MCF 10A (cell line): ENCODE measurements at regions of chr15 and their contacts with region 1.

Region 1: GRCh38 chr15:38354315-38354929 is 99.5 kb upstream of the FAM98B start:
- DNase-seq: peak; percentile 78
- H3K4me3 Mint-ChIP-seq: no peak overlapping the region
- H3K27ac Mint-ChIP-seq: no peak overlapping the region
- H3K4me1 Mint-ChIP-seq: no peaks in the 10 kb centered on the region
- H3K27me3 Mint-ChIP-seq: no peaks in the 10 kb centered on the region
- CTCF ChIP-seq: peak; percentile 63

Region 2: DNA sequence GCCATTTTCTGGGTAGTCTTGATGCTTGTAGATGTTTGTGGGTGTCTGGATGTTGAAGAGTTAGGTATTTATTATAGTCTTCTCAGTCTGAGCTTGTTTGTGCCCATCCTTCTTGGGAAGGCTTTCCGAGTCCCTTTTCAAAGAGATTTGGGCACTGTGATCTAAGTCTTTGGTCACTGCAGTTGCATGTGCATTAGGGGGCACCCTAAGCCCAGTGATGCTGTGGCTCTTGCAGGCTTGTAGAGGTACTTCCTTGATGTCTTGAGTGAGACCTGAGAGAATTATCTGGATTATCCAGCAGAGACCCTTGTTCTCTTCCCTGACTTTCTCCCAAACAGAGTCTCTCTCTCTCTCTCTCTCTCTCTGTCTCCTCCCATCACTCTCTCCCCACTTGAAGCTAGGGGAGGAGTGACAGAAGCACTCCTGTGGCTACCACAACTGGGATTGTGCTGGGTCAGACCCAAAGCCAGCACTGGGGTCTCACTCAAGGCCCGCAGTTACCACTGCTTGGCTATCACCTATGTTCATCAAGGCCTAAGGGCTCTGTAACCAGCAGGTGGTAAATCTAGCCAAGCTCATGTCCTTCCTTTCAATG is 351.4 kb before region 1 on chr15:
- CTCF ChIA-PET with region 1: interaction called, 109 read pairs
- POLR2A ChIA-PET with region 1: interaction called, 5 read pairs
- intact Hi-C with region 1: loop called (anchors 1 kb)
- DNase-seq: peak; percentile 75
- H3K4me3 Mint-ChIP-seq: no peak overlapping the region
- H3K27ac Mint-ChIP-seq: no peak overlapping the region
- H3K4me1 Mint-ChIP-seq: peaks cover 4% of the 10 kb centered on the region
- H3K27me3 Mint-ChIP-seq: no peaks in the 10 kb centered on the region
- CTCF ChIP-seq: peak; percentile 90

Region 3: DNA sequence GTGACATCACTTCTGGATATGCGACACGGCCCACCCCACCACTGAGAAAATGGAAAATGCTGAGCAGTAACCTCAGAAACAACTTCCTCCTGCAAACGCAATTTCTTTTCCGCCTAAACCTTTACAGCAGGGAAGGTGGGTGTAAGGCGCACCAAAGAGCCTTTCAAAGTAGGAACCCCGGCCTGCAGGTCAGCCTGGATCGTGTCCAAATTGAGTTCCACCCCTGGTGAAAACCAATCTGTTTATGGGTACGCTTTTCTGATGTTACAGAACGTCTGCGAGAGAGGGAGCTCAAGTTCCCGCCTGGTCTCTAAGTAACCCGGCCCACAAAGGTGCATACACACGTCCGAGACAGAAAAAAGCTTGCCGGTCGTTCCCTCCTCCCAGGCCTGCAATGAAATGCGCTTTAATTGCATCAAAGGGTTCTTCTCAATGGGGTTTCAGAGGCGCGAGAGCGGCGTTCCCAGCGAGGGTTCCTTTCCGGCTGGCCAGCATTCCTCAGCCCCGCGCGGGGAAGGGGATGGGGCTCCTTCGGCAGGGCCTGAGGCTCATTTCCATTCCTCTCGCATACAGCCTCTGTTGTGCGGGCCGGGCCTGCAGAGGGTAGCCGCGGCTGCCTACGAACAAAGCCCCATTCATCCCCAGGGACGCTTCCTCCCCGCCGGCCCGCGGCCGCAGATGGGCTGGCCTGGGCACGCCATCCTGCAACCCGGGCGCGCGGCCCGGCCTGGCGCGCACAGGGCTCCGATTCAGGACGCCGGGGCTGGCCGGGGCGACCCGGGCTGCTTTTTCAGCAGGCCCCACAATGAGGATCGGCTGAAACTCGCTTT is 281.9 kb before region 1 on chr15:
- CTCF ChIA-PET with region 1: no interaction called
- POLR2A ChIA-PET with region 1: no interaction called
- intact Hi-C with region 1: loop called (anchors 5 kb)
- DNase-seq: peak; percentile 82
- H3K4me3 Mint-ChIP-seq: peak overlapping the region; percentile 77
- H3K27ac Mint-ChIP-seq: peak overlapping the region; percentile 88
- H3K4me1 Mint-ChIP-seq: peaks cover 18% of the 10 kb centered on the region
- H3K27me3 Mint-ChIP-seq: no peaks in the 10 kb centered on the region
- CTCF ChIP-seq: peak; percentile 21

Region 4: DNA sequence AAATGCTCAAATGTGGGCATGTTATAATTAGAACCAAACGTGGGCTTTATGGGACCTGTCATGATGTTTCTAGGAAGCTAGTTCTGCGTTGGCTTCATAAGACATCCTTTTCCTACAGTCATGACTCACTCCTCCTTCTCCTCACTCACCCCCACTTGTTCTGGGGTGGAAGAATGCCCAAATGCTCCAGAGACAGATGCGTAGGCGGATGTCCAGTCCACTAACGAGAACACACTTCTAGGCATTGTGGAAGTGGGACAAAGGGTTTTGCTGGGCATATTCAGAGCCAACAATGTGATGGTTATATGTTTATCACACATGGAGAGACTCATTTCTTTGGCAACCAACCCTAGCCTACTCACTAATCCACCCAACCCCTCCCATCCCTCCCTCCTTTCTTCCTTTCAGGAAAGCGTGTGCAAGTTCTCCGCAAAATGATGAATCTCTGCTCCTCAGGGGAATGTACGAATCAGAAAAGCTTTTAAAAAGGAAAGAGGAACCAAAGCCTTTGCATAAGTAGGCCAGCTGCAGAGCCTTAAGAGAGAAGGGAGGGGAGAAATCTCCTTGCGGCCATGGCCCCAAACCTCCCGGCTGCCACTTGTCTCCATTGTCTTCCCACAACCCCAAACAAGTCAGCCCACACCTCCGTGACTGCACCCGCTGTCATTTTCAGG is 224.8 kb before region 1 on chr15:
- CTCF ChIA-PET with region 1: interaction called, 4 read pairs
- POLR2A ChIA-PET with region 1: no interaction called
- intact Hi-C with region 1: loop called (anchors 2 kb)
- DNase-seq: peak; percentile 99
- H3K4me3 Mint-ChIP-seq: peak overlapping the region; percentile 70
- H3K27ac Mint-ChIP-seq: peak overlapping the region; percentile 76
- H3K4me1 Mint-ChIP-seq: peaks cover 29% of the 10 kb centered on the region
- H3K27me3 Mint-ChIP-seq: no peaks in the 10 kb centered on the region
- CTCF ChIP-seq: no peak

Region 5: GRCh38 chr15:38164061-38164460 is 190.4 kb before region 1 on chr15:
- CTCF ChIA-PET with region 1: no interaction called
- POLR2A ChIA-PET with region 1: no interaction called
- intact Hi-C with region 1: no loop called
- DNase-seq: no peak
- H3K4me3 Mint-ChIP-seq: no peak overlapping the region
- H3K27ac Mint-ChIP-seq: no peak overlapping the region
- H3K4me1 Mint-ChIP-seq: no peaks in the 10 kb centered on the region
- H3K27me3 Mint-ChIP-seq: no peaks in the 10 kb centered on the region
- CTCF ChIP-seq: no peak

Region 6: DNA sequence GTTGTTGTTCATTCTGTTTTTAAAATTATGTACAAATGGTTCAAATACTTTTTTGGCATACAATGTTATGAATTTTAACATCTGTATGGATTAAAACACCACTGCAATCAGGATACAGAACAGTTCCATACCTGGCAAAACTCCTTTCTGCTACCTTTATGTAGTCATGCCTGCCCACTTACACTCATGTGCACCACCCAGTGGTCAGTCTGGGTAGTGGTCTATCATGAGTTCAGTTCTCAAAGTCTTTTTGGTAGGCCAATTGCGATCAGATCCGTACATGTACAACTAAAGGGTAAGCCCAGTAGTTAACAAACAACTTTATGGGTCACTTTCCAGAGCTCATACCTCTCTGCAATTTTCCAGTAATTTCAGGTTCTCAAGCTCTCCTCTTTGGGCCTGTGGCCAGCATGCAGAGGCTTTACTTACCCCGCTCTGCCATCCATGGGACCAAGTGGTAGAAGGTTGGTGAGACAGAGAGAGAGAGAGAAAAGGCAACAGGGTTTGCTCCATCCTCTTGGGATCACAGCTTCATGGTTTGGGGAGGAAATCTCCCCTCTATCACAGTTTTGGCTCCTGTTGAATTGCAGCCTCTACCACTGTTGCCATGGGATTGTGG is 35.6 kb after region 1 on chr15:
- CTCF ChIA-PET with region 1: interaction called, 33 read pairs
- POLR2A ChIA-PET with region 1: interaction called, 3 read pairs
- intact Hi-C with region 1: no loop called
- DNase-seq: peak; percentile 77
- H3K4me3 Mint-ChIP-seq: no peak overlapping the region
- H3K27ac Mint-ChIP-seq: no peak overlapping the region
- H3K4me1 Mint-ChIP-seq: no peaks in the 10 kb centered on the region
- H3K27me3 Mint-ChIP-seq: no peaks in the 10 kb centered on the region
- CTCF ChIP-seq: peak; percentile 67

Region 7: GRCh38 chr15:38414357-38414756 is 59.9 kb after region 1 on chr15:
- CTCF ChIA-PET with region 1: no interaction called
- POLR2A ChIA-PET with region 1: no interaction called
- intact Hi-C with region 1: loop called (anchors 1 kb)
- DNase-seq: peak; percentile 70
- H3K4me3 Mint-ChIP-seq: no peak overlapping the region
- H3K27ac Mint-ChIP-seq: no peak overlapping the region
- H3K4me1 Mint-ChIP-seq: no peaks in the 10 kb centered on the region
- H3K27me3 Mint-ChIP-seq: peaks cover 17% of the 10 kb centered on the region
- CTCF ChIP-seq: peak; percentile 80